HEK293 (cell line): ENCODE measurements at regions of chr2 and their contacts with region 1.

Region 1: DNA sequence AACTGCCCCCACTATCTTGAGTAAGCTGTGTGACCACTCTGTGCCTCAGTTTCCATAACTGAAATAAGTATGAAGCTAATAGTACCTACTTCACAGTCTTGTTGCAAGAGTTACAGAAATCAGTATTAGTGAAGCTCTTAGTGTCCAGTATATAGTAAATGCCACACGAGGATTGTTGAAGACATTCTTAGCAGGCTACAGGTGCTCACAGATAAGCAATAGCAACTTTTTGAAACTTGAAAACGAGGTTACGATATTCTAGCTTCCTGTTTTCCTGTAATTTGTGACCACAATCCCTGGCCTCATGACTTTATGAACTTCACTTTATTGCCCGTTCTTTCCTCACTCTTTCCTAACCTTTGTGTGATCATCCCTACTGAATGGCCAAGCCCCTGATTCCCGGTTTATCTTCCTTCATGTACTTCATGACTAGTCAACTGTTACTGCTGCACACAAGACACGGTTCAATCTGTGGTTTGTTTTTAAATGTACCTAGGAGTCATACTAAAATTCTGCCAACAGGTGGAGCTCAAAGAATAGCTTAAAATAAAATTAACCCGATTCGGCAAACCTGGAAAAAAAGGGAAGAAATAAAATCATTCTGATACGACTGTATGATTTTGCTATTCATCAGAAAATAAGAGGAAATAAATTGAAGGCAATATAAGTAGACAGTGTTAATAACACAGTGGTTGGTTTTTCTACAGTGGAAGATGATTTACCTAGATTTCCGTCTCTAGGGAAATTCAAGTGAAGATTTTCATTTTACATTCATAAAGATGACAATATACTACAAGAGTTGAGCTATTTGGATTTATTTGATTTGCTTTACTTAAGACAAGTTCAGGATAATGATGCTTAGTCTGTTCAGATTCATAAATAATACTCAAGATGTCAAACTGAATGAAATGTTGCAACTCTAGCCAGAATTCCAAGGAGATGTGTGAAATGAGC is 38.1 kb upstream of the STAT1 start:
- H3K4me3 ChIP-seq: no peak overlapping the region
- H3K27ac ChIP-seq: no peak overlapping the region
- H3K4me1 ChIP-seq: no peaks in the 10 kb centered on the region; the same call in 1 of the 2 replicates
- CTCF ChIP-seq: peak; percentile 13; the same call in 1 of the 2 replicates

Region 2: GRCh38 chr2:191041418-191042161 is 10.5 kb before region 1 on chr2:
- CTCF ChIA-PET with region 1: interaction called, 17 read pairs
- POLR2A ChIA-PET with region 1: interaction called, 4 read pairs
- H3K4me3 ChIP-seq: no peak overlapping the region
- H3K27ac ChIP-seq: no peak overlapping the region
- H3K4me1 ChIP-seq: peaks cover under 1% of the 10 kb centered on the region; the same call in 1 of the 2 replicates
- CTCF ChIP-seq: no peak

Region 3: DNA sequence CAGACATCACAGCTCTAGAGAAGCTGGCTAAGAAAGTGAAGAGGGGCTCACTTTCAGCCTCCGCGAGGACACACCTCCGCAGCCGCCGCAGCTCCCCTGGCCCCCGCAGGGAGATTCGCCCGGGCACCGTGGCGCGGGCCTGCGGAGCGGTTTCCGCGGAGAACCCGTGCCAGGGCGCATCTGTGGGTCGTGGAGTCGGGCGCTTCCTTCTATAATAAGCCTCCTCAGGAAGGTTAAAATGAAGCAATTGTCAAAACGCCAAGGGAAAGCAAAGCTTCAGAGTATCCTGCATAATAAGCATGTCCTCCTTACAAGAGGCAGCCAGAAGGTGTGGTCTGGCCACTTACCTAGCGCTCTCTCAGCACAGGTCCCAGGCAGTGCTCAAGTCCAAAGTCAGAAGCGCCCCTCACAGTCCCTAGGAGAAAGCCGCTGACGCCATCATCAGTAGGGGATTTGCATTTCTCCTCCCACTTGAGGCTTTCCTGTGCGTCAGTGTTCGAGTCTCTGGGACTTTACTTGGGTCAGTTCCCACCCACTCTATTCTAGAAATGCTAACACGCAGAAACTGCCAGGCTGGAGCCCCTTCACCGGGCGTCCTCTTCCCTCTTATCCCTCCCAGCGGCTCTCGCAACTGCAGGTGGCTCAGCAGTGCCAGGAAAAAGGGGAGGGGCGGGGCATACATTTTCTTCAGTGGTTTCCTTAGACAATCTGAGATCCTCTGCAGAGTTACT is 98.7 kb after region 1 on chr2 and contains the start of gene STAT4:
- CTCF ChIA-PET with region 1: interaction called, 146 read pairs
- POLR2A ChIA-PET with region 1: no interaction called
- H3K4me3 ChIP-seq: peak within 1 kb of the TSS; percentile 35
- H3K27ac ChIP-seq: no peak within 1 kb of the TSS; the same call in 1 of the 2 replicates
- H3K4me1 ChIP-seq: no peaks in the 10 kb centered on the region
- CTCF ChIP-seq: no peak

Region 4: DNA sequence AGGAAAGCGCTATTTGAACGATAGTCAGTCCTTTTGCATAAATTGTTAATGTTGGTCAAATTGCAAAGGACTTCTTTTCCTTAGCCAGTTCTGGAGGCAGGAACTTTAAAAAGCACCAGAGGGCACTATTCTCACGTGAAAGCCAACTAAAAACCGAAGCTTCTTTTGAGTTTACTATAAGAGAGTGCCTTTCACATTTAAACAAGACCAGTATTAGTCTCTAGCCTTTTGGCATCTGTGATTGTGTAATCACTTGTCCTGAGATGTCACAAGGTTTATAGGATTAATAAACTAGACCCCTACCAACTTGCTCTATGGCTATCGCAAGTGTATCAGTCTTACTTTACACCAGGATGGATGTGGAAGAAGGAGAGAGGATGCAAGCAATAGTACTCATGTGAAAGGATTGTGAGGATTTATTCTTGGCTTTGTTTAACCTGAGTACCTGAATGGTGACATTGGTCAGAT is 113.1 kb after region 1 on chr2:
- CTCF ChIA-PET with region 1: interaction called, 54 read pairs
- POLR2A ChIA-PET with region 1: no interaction called
- H3K4me3 ChIP-seq: no peak overlapping the region
- H3K27ac ChIP-seq: no peak overlapping the region
- H3K4me1 ChIP-seq: peaks cover 10% of the 10 kb centered on the region; the same call in 1 of the 2 replicates
- CTCF ChIP-seq: no peak

Region 5: GRCh38 chr2:191501561-191502168 is 449.6 kb after region 1 on chr2:
- CTCF ChIA-PET with region 1: interaction called, 35 read pairs
- POLR2A ChIA-PET with region 1: no interaction called
- H3K4me3 ChIP-seq: no peak overlapping the region
- H3K27ac ChIP-seq: no peak overlapping the region
- H3K4me1 ChIP-seq: no peaks in the 10 kb centered on the region
- CTCF ChIP-seq: peak; percentile 26; the same call in 1 of the 2 replicates